GM10248 (cell line): ENCODE measurements at regions of chr18 and their contacts with region 1.

Region 1: DNA sequence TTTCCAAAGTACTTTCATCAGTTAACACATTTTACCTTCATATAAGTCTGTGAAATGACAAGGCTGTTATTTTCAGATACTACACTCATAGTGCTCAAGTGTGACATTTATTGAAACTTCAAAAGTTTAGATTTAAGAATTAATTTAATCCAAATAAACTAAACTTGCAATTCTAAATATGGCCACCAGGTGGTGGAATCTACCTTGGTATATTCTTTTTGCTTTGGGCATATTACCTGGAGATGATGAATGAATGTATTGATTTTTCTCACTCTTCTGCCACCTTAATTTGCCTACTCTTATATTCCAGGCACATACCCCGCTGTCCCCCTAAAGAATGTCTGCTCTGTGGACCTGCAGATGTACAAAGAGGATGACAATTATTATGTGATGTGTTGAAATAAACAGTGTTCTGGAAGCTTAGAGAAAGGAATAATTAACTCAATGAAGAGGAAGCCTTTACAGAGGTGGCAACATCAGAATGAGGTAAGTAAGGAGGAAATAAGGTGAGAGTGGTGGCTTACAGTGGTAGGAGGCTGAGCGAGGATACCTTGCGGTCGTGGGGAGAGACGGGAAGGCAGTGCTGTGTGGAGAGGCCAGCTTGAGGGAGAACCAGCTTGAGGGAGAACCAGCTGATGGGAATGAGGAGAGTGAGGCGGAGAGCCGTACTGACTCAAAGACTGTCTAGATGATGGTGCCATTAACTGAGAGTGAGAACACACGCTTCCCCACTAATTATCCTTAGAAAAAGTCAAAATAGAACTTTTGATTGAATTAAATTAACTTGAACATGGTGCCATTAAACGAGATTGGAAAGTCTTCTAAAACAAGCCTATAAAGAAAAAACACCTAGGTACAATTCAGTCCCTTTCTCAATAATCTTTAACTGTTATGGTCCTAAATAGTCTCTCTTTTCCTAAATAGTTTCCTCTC is 179.5 kb downstream of the CELF4 start:
- DNase-seq: peak; percentile 53
- CTCF ChIP-seq: peak; percentile 51

Region 2: GRCh38 chr18:37537868-37538525 is 151.9 kb after region 1 on chr18:
- CTCF ChIA-PET with region 1: interaction called, 22 read pairs
- POLR2A ChIA-PET with region 1: no interaction called
- DNase-seq: peak; percentile 87
- CTCF ChIP-seq: peak; percentile 93